Activated B cell treated with CpG ODN at 0.5 μM for 24 hours (primary cell): ENCODE measurements at regions of chr6 and their contacts with region 1.

Region 1: GRCh38 chr6:31203345-31203979 is 33.0 kb upstream of the POU5F1 start:
- DNase-seq: no peak
- ATAC-seq: peak; percentile 64
- H3K4me3 Mint-ChIP-seq: peak overlapping the region; percentile 89
- H3K27ac Mint-ChIP-seq: peak overlapping the region; percentile 94
- H3K4me1 Mint-ChIP-seq: peaks cover 55% of the 10 kb centered on the region
- H3K27me3 Mint-ChIP-seq: no peaks in the 10 kb centered on the region
- CTCF ChIP-seq: no peak

Region 2: GRCh38 chr6:31216208-31216898 is 12.9 kb after region 1 on chr6:
- CTCF ChIA-PET with region 1: no interaction called
- POLR2A ChIA-PET with region 1: no interaction called
- intact Hi-C with region 1: no loop called
- DNase-seq: no peak
- ATAC-seq: peak; percentile 7
- H3K4me3 Mint-ChIP-seq: no peak overlapping the region
- H3K27ac Mint-ChIP-seq: peak overlapping the region; percentile 70
- H3K4me1 Mint-ChIP-seq: peaks cover 11% of the 10 kb centered on the region
- H3K27me3 Mint-ChIP-seq: no peaks in the 10 kb centered on the region
- CTCF ChIP-seq: no peak

Region 3: DNA sequence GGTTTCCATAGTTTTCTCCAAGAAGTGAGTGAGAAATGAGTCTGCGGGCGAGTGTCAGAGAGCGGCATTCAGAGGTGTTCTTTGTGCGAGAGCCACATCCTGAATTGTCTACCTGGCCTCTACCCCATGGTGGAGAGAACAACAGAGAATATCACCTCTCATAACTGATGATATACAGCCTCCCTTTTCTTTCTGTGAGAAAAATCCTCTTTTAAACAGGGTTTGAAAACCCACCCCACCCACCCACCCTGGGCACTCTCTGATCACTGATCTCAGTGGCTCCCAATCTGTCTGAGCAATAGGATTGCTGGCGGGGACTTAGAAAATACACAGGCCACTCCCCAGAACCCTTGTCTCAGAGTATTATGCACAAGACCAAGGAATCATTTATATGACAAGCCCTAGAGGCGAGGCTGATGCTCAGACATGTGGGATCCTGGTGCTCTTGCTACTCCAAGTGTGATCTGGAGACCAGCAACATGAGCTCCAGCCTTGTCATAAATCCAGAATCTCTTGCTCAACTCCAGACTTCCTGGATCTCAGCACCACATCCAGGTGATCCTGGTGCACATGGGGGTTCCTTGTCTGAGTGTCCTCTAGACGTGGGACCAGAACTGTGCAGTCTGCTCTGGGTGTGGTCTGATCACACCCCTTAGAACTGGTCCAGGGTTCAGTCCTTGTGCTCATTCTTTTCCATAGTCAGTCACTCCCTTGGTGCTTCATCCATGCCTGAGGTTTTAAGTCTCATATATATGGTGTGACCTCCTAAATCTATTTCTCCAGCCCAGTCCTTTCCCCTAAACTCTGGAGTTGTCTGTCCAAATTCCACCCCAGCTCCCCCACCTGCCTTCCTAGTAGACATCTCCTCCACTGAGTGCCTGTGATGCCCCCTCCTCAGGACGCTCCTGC is 148.2 kb after region 1 on chr6:
- CTCF ChIA-PET with region 1: no interaction called
- POLR2A ChIA-PET with region 1: interaction called, 44 read pairs
- intact Hi-C with region 1: no loop called
- DNase-seq: no peak
- ATAC-seq: peak; percentile 6
- H3K4me3 Mint-ChIP-seq: peak overlapping the region; percentile 95
- H3K27ac Mint-ChIP-seq: peak overlapping the region; percentile 74
- H3K4me1 Mint-ChIP-seq: peaks cover 61% of the 10 kb centered on the region
- H3K27me3 Mint-ChIP-seq: no peaks in the 10 kb centered on the region
- CTCF ChIP-seq: no peak

Region 4: DNA sequence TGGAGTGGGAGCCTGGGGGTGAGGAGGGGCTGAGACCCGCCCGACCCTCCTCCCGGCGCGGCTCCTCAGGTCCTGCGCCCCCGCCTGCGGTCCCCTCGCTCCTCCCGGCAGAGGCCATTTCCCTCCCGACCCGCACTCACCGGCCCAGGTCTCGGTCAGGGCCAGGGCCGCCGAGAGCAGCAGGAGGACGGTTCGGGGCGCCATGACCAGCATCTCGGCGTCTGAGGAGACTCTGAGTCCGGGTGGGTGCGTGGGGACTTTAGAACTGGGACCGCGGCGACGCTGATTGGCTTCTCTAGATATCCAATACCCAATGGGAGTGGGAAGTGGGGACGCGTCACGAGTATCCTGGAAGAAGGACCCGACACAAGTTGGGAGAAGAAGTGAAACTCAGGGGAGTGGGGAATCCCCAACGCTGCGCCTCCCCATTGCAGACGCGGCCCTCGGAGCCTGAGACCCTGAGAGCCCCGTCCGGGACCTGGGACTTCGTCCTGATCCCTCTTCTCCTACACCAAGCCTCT is 153.5 kb after region 1 on chr6 and contains the start of gene HLA-B:
- CTCF ChIA-PET with region 1: no interaction called
- POLR2A ChIA-PET with region 1: interaction called, 44 read pairs
- intact Hi-C with region 1: loop called (anchors 1 kb)
- DNase-seq: peak; percentile 64
- ATAC-seq: peak; percentile 85
- H3K4me3 Mint-ChIP-seq: peak within 1 kb of the TSS; percentile 95
- H3K27ac Mint-ChIP-seq: peak within 1 kb of the TSS; percentile 100
- H3K4me1 Mint-ChIP-seq: peaks cover 54% of the 10 kb centered on the region
- H3K27me3 Mint-ChIP-seq: no peaks in the 10 kb centered on the region
- CTCF ChIP-seq: no peak
- total RNA-seq, gene HLA-B: 3,667 and 3,668 TPM in 2 replicates